IMR-90 (cell line): ENCODE measurements at regions of chr20 and their contacts with region 1.

Region 1: DNA sequence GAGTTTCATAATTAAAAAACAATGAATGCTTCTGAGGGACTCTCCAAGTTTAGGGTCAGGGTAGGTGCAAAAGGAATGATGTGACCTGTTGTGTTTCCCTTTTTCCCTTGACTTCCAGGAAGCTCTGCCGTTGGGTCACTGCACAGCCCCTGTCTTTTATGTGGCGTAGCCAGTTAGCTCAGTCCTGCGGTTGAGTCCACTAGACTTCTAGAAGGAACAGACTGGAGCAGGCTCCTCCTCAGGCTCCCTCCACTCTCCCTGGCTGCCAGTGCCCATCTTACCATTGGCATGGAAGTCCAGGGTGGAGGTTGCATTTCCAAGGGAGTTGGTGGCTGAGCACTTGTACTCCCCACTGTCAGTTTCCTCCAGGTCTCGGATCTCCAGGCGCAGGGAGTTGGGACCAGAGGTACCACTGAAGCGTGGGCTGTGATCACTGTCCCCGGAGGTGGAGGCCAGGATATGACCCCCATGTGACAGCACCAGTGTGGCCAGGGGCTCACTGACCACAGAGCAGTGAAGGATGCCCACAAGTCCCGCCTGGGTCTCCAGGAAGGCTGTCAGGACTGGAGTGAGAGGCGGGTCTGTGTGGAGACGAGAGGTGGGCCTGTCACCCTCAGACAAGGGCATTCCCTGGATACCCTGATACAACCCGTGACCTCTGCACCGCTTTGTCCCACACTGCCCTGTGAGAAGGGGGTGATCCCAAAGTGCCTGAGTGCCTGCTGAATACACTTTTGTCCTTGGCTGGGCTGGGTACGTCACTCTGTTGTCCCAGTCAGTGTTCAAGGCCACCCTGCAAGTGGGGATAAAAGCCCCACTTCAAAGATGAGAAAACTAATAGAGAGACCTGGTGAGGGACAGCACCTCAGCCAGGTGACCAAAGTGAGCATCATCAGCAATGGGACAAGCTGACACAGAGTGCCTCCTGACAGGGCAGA is 11.1 kb downstream of the SIGLEC1 start:
- DNase-seq: no peak
- ATAC-seq: no peak
- H3K4me3 ChIP-seq: no peak overlapping the region
- H3K27ac ChIP-seq: no peak overlapping the region
- H3K4me1 ChIP-seq: no peaks in the 10 kb centered on the region
- H3K27me3 ChIP-seq: peaks cover 44% of the 10 kb centered on the region
- CTCF ChIP-seq: no peak
- POLR2A ChIP-seq: no peak
- RAD21 ChIP-seq: no peak

Region 2: GRCh38 chr20:3146732-3147341 is 554.5 kb before region 1 on chr20:
- CTCF ChIA-PET with region 1: interaction called, 12 read pairs
- POLR2A ChIA-PET with region 1: no interaction called
- dilution Hi-C with region 1: no loop called
- in situ Hi-C with region 1: no loop called
- intact Hi-C with region 1: no loop called
- DNase-seq: peak; percentile 9
- ATAC-seq: no peak
- H3K4me3 ChIP-seq: no peak overlapping the region
- H3K27ac ChIP-seq: no peak overlapping the region
- H3K4me1 ChIP-seq: 0 out of 2 replicates have a peak, but pooled peaks cover 2% of the 10 kb centered on the region
- H3K27me3 ChIP-seq: no peaks in the 10 kb centered on the region
- CTCF ChIP-seq: no peak
- POLR2A ChIP-seq: no peak
- RAD21 ChIP-seq: no peak

Region 3: GRCh38 chr20:3987296-3987695 is 286.0 kb after region 1 on chr20:
- CTCF ChIA-PET with region 1: no interaction called
- POLR2A ChIA-PET with region 1: no interaction called
- dilution Hi-C with region 1: no loop called
- in situ Hi-C with region 1: no loop called
- intact Hi-C with region 1: no loop called
- DNase-seq: no peak
- ATAC-seq: no peak
- H3K4me3 ChIP-seq: no peak overlapping the region
- H3K27ac ChIP-seq: no peak overlapping the region
- H3K4me1 ChIP-seq: no peaks in the 10 kb centered on the region
- H3K27me3 ChIP-seq: no peaks in the 10 kb centered on the region
- CTCF ChIP-seq: no peak
- POLR2A ChIP-seq: no peak
- RAD21 ChIP-seq: no peak